GM12878 (cell line): ENCODE measurements at regions of chr6 and their contacts with region 1.

Region 1: GRCh38 chr6:107657755-107658461 is 166.2 kb downstream of the SCML4 start:
- DNase-seq: peak; percentile 96
- ATAC-seq: peak; percentile 92
- H3K4me3 ChIP-seq: peak overlapping the region; percentile 64
- H3K27ac ChIP-seq: peak overlapping the region; percentile 84
- H3K4me1 ChIP-seq: peaks cover 19% of the 10 kb centered on the region
- H3K27me3 ChIP-seq: no peaks in the 10 kb centered on the region
- CTCF ChIP-seq: peak; percentile 4 to 47 (median 43); a peak in 3 of 6 replicates
- EP300 ChIP-seq: peak in 1 of 2 experiments; percentile 57; a peak in 1 of 4 replicates
- POLR2A ChIP-seq: peak; percentile 64
- RAD21 ChIP-seq: 0 out of 2 replicates have a peak, but pooled peaks have one; percentile 0

Region 2: DNA sequence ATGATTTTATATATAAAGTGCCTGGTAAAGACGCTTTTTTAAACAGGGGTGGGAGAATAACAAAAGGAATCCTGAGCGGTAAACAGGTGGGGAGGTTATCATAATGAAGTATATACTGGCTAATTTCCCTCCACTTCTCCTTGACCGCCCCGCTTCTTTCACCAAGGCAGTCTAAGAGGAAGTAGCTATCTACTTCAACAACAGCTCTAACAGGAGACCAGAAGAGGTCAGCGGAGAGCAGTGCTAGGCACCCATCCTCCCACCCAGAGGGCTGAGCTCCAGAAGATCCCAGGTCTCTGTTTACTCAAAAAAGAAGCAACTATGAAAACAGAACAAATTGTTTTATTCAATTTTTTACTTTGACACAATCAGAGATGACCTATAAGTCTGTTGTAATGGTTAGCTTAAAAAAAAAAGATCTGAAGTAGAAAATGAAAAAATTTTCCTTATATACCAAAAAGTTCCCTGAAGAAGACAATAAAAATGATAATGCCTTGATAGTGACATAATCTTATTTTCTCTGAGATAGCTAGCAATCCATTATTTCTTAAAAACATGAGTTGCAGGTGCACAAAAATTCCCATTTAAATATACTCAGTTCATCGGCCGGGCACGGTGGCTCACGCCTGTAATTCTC is 339.7 kb before region 1 on chr6:
- CTCF ChIA-PET with region 1: interaction called, 11 read pairs
- POLR2A ChIA-PET with region 1: no interaction called
- RAD21 ChIA-PET with region 1: interaction called, 5 read pairs
- SMC1A ChIA-PET with region 1: interaction called, 6 read pairs
- in situ Hi-C with region 1: no loop called
- intact Hi-C with region 1: loop called (anchors 5 kb)
- DNase-seq: peak; percentile 7
- ATAC-seq: peak; percentile 99
- H3K4me3 ChIP-seq: no peak overlapping the region
- H3K27ac ChIP-seq: no peak overlapping the region
- H3K4me1 ChIP-seq: no peaks in the 10 kb centered on the region
- H3K27me3 ChIP-seq: no peaks in the 10 kb centered on the region
- CTCF ChIP-seq: peak; percentile 64 to 83 (median 71)
- EP300 ChIP-seq: no peak
- POLR2A ChIP-seq: no peak
- RAD21 ChIP-seq: peak; percentile 86

Region 3: DNA sequence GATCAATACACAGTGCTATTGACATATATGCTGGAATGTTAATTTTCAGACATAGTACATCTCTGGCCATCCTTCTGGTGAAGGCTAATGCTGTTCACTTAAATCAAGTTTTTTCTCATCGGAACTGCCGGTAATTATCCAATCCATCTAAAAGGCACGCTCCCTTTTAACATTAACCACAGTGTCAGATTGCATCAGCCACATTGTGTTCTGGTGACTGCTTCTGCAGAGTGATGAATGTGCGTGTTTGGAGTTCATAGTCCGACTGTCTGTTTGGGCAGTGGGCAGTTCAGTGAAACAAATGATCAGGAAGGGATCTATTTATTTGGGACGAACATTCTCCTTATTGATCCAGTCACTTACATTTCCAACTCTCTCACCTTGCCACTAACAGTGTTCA is 118.5 kb before region 1 on chr6:
- CTCF ChIA-PET with region 1: no interaction called
- POLR2A ChIA-PET with region 1: no interaction called
- RAD21 ChIA-PET with region 1: no interaction called
- SMC1A ChIA-PET with region 1: no interaction called
- in situ Hi-C with region 1: no loop called
- intact Hi-C with region 1: loop called (anchors 5 kb)
- DNase-seq: no peak
- ATAC-seq: no peak
- H3K4me3 ChIP-seq: no peak overlapping the region
- H3K27ac ChIP-seq: no peak overlapping the region
- H3K4me1 ChIP-seq: no peaks in the 10 kb centered on the region
- H3K27me3 ChIP-seq: peaks cover 0 to 5% of the 10 kb centered on the region in 2 experiments; a peak in 2 of 4 replicates
- CTCF ChIP-seq: no peak
- EP300 ChIP-seq: no peak
- POLR2A ChIP-seq: no peak
- RAD21 ChIP-seq: no peak

Region 4: DNA sequence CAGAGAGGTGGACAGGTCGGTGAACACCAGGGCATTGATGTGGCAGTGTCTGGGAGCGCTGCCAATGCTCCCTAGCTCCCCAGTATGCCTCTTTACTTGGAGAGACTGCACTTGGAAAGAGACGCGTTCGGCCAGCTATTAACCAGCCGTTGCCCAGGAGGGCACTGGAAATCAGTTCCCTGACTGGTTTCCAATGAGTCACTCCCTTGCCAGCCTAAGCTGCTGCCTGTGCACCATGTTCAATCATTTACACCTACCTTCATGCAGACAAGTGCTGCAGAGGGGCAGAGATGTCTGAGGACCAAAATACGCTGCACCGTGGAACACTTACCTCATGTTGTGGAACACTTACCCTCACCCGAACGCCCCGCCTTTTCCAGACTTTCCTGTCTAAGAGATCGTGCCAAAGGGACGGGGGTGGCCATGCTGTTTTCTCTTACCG is 16.4 kb before region 1 on chr6:
- CTCF ChIA-PET with region 1: interaction called, 31 read pairs
- POLR2A ChIA-PET with region 1: interaction called, 9 read pairs
- RAD21 ChIA-PET with region 1: interaction called, 8 read pairs
- SMC1A ChIA-PET with region 1: interaction called, 16 read pairs
- in situ Hi-C with region 1: no loop called
- intact Hi-C with region 1: no loop called
- DNase-seq: no peak
- ATAC-seq: no peak
- H3K4me3 ChIP-seq: no peak overlapping the region
- H3K27ac ChIP-seq: no peak overlapping the region
- H3K4me1 ChIP-seq: peaks cover 11% of the 10 kb centered on the region
- H3K27me3 ChIP-seq: no peaks in the 10 kb centered on the region; a peak in 1 of 4 replicates
- CTCF ChIP-seq: no peak
- EP300 ChIP-seq: no peak
- POLR2A ChIP-seq: no peak
- RAD21 ChIP-seq: no peak